ENCODE measurements at regions of chr11 and their contacts with region 1.

Region 1: DNA sequence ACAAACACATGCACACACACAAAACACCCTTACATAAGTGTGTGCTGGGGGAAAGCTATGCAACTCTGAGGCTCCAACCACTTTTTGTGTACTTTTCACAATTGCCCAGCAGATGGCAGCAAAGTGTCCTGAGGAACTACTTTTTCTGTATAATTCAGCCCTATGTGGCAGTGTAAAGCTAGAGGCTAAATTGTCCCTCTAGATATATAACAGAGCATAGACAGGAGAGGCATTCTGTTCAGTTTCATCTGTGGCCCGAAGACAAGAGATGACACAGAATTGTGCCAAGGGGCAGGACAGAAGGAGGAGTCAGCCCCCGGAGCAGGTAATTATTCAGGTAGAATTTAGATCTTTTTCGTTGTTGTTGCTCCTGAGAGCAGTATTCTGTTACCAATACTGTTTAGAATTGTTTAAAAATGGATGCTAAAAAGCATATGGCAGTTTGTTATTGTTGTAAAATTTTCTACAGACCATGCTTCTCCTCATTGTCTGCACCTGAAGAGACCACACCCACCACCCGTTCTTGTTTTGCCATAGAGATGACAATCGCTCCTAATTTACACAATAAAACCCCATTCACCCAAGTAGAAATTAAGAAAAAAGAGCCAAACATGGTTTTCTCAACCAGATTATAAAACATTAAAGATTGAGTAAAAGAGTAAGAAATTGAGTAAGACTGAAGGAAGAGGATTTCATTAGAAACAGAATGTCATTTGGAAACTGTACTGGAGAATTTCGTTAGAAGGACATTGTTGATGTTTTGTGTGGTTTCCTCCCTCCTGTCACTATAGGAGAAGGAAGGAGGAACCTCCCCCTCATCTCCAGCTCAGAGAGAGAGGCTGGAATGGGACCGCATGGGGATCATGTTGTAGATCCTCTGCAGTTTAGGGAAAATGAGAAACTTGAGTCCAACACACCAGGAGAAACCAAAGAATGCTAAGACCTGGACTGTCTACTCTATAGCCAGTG is 14.5 kb upstream of the MS4A7 start:
- DNase-seq: peak; percentile 24 to 59 (median 35)
- H3K4me3 ChIP-seq: no peak overlapping the region
- H3K4me3 Mint-ChIP-seq: no peak overlapping the region
- H3K27ac ChIP-seq: no peak overlapping the region
- H3K27ac Mint-ChIP-seq: no peak overlapping the region
- H3K4me1 ChIP-seq: no peaks in the 10 kb centered on the region
- H3K4me1 Mint-ChIP-seq: no peaks in the 10 kb centered on the region
- H3K27me3 ChIP-seq: no peaks in the 10 kb centered on the region
- H3K27me3 Mint-ChIP-seq: peaks cover 9 to 33% of the 10 kb centered on the region in 2 donors

Region 2: DNA sequence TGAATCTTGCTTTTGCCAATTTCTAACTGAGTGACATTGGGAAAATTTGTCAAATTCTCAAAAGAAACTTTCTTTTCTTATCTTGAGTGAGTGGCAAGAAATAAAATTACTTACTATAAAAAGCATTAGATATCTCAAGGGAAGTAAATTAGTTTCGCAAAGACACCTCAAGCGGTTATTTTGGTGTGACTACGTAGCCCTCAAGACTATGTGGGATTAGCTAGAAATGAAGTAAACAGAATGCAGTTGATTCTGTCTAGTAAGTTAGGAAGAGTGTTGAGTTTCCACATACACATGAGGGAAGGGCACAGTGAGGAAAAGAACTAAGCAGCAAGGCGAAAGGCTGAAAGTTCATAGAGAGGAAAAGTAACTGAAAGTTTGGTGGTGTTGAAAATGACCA is 152.6 kb before region 1 on chr11:
- CTCF ChIA-PET with region 1: no interaction called
- POLR2A ChIA-PET with region 1: no interaction called
- DNase-seq: no peak
- H3K4me3 ChIP-seq: no peak overlapping the region
- H3K4me3 Mint-ChIP-seq: no peak overlapping the region
- H3K27ac ChIP-seq: no peak overlapping the region
- H3K27ac Mint-ChIP-seq: no peak overlapping the region
- H3K4me1 ChIP-seq: no peaks in the 10 kb centered on the region
- H3K4me1 Mint-ChIP-seq: no peaks in the 10 kb centered on the region
- H3K27me3 ChIP-seq: no peaks in the 10 kb centered on the region
- H3K27me3 Mint-ChIP-seq: peaks cover 12 to 43% of the 10 kb centered on the region in 2 donors

Region 3: GRCh38 chr11:60485986-60486385 is 122.2 kb after region 1 on chr11:
- CTCF ChIA-PET with region 1: interaction called, 12 read pairs
- POLR2A ChIA-PET with region 1: no interaction called
- DNase-seq: no peak
- H3K4me3 ChIP-seq: no peak overlapping the region
- H3K4me3 Mint-ChIP-seq: no peak overlapping the region
- H3K27ac ChIP-seq: no peak overlapping the region
- H3K27ac Mint-ChIP-seq: peak overlapping the region in 1 of 8 donors; percentile 6
- H3K4me1 ChIP-seq: no peaks in the 10 kb centered on the region
- H3K4me1 Mint-ChIP-seq: peaks cover 8 to 13% (median 11%) of the 10 kb centered on the region in 3 donors
- H3K27me3 ChIP-seq: no peaks in the 10 kb centered on the region
- H3K27me3 Mint-ChIP-seq: peaks cover 7 to 12% of the 10 kb centered on the region in 2 donors

Region 4: GRCh38 chr11:60625262-60625661 is 261.4 kb after region 1 on chr11:
- CTCF ChIA-PET with region 1: interaction called, 16 read pairs
- POLR2A ChIA-PET with region 1: no interaction called
- DNase-seq: no peak
- H3K4me3 ChIP-seq: no peak overlapping the region
- H3K4me3 Mint-ChIP-seq: no peak overlapping the region
- H3K27ac ChIP-seq: no peak overlapping the region
- H3K27ac Mint-ChIP-seq: no peak overlapping the region
- H3K4me1 ChIP-seq: no peaks in the 10 kb centered on the region
- H3K4me1 Mint-ChIP-seq: no peaks in the 10 kb centered on the region
- H3K27me3 ChIP-seq: no peaks in the 10 kb centered on the region
- H3K27me3 Mint-ChIP-seq: peaks cover 2 to 11% of the 10 kb centered on the region in 2 donors